ENCODE measurements at regions of chr4 and their contacts with region 1.

Region 1: DNA sequence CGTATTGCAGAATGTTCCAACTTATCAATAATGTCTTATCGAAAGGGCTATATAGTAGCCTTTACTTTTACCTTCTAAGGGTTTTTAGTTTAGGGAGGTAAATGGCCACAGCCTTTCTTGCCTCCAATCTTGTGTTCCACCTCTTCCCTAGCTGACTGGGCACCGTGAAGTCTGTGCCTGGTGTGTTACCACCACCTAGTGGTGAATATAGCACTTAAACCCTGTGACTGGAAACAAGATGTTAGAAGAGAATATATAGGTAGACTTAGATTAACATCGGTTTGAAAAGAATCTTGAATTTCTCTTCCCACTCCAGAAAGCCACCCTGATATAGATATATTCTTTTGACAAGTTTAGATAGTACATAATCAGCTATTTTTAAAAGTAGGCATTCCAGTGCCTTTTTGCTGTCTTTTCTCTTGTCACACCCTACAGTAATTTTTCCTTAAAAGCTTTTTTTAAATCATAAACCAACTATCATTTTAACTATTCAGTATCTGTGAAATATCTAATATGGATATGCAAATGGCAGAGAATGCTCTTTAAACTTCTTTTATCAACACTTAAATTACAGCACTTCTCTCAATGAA is 27.8 kb upstream of the ADH7 start:
- DNase-seq: peak in 4 of 5 donors; percentile 20 to 33 (median 29)
- ATAC-seq: peak in 3 of 4 donors; percentile 72 to 88 (median 85)
- H3K4me3 ChIP-seq: no peak overlapping the region
- H3K27ac ChIP-seq: no peak overlapping the region
- H3K4me1 ChIP-seq: no peaks in the 10 kb centered on the region
- H3K27me3 ChIP-seq: peaks cover 0 to 23% (median 0%) of the 10 kb centered on the region in 9 donors
- CTCF ChIP-seq: peak; percentile 63 to 82 (median 70)
- POLR2A ChIP-seq: no peak

Region 2: DNA sequence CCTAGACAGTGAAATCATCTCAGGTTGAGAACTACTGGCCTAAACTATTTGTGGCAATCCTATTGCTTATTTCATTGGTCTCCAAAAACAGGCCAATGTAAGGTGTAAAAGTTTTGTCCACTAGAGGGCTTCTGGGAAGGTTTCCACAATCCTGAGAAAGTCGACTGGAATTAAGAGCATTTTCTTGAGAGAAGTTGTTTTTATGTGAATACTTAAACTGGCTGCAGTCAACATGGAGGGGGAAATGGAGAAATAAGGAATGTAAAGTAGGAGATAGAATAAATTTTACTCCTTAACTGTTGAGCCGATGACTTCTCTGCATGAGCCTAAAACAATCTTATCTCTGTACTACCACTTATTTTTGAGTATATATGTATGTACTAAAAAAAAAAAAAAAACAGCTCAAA is 523.1 kb before region 1 on chr4:
- intact Hi-C with region 1: loop called in 1 of 10 experiments (anchors 5 kb)
- DNase-seq: no peak
- ATAC-seq: peak in 3 of 4 donors; percentile 42 to 55 (median 45)
- H3K4me3 ChIP-seq: no peak overlapping the region
- H3K27ac ChIP-seq: no peak overlapping the region
- H3K4me1 ChIP-seq: no peaks in the 10 kb centered on the region
- H3K27me3 ChIP-seq: no peaks in the 10 kb centered on the region
- CTCF ChIP-seq: peak; percentile 58 to 82 (median 70)
- POLR2A ChIP-seq: no peak

Region 3: DNA sequence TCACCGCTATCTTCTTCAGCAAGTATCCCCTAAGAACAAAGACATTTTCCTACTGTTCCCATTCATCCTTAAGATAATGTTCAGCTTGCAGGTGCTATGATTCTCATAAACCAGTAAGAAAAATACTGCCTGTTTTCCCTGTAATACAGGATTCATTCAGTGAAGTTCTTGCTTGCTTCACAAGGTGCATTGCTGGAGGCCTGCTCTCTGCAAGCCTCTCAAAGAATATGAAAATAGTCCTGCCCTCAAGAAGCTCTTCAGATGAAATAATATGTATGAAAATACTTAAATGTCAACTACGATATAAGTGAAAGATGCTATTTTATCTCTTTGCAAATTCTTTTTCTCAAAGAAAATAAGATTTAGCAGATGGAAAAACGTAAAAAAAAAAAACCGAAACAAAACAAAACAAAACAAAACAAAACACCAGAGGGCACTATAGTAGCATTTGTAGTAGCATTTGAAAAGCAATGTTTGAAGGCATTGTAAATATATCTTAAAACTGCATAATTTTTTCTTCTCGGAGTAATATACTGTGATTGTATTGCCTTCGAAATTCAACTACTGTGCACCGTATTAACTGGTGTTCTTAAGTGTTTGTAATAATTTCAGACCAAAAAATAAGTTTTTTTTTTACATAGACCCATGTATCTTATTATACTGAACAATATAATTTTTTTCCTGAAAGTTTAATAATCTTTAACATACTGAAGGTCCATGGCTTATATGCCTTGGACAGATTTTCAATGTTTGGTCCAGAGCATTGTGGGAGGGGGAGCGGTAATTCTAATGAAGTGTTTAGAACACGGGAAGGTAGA is 344.9 kb before region 1 on chr4:
- intact Hi-C with region 1: loop called in 8 of 10 experiments (anchors 2 to 10 kb)
- DNase-seq: no peak
- ATAC-seq: no peak
- H3K4me3 ChIP-seq: no peak overlapping the region
- H3K27ac ChIP-seq: no peak overlapping the region
- H3K4me1 ChIP-seq: peaks cover 0 to 3% (median 0%) of the 10 kb centered on the region in 12 donors
- H3K27me3 ChIP-seq: no peaks in the 10 kb centered on the region
- CTCF ChIP-seq: peak in 11 of 12 donors; percentile 26 to 68 (median 51)
- POLR2A ChIP-seq: no peak

Measured in heart left ventricle (tissue), 16 donors.